ENCODE measurements at regions of chr2 and their contacts with region 1.

Region 1: GRCh38 chr2:152036611-152037469 is 62.0 kb downstream of the CACNB4 start:
- DNase-seq: peak; percentile 63 to 85 (median 72)
- H3K4me3 ChIP-seq: no peak overlapping the region
- H3K27ac ChIP-seq: no peak overlapping the region
- H3K4me1 ChIP-seq: no peaks in the 10 kb centered on the region
- H3K27me3 ChIP-seq: no peaks in the 10 kb centered on the region
- CTCF ChIP-seq: peak; percentile 68 to 86 (median 78)
- POLR2A ChIP-seq: no peak

Region 2: GRCh38 chr2:152175458-152176325 is 138.9 kb after region 1 on chr2 and contains the start of gene STAM2:
- intact Hi-C with region 1: loop called in 1 of 2 experiments (anchors 5 kb)
- DNase-seq: peak; percentile 92 to 97 (median 94)
- H3K4me3 ChIP-seq: peak within 1 kb of the TSS; percentile 29 to 99 (median 82)
- H3K27ac ChIP-seq: peak within 1 kb of the TSS; percentile 92 to 99 (median 97)
- H3K4me1 ChIP-seq: peaks cover 10 to 36% of the 10 kb centered on the region in 2 donors
- H3K27me3 ChIP-seq: no peaks in the 10 kb centered on the region
- CTCF ChIP-seq: peak; percentile 86 to 97 (median 94)
- POLR2A ChIP-seq: peak; percentile 78 to 88
- total RNA-seq, gene STAM2: 22.8 to 45.8 (median 34.0) TPM

Region 3: DNA sequence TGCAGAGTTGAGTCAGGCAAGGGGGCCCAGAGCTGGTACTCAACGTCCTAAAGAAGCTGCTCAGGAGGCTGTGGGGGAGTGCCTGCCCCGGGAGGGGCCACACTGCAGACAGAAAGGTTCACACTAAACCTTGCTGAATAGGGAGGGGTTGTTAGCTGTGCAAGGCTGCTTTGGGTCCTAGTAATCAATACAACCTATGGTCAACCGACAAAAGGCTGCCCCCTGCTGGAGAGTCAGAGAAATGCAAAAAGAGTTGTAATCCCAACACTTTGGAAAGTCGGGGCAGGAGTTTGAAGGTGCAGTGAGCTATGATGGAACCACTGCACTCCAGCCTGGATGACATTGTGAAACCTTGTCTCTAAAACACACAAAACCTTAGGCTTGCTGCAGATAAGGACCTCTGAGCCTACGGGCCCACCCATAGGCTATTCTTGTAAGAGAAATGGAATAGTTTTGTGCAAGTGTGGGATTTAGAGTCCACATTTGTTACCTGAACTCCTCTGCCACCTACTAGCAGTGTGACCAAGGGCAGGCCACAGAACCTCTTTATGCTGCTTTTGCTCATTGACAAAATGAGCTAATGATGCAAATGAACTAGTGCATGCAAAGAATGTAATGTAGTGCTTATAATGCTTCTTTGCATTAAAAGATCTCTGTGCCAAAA is 598.9 kb after region 1 on chr2:
- intact Hi-C with region 1: loop called in 1 of 2 experiments (anchors 5 kb)
- DNase-seq: peak; percentile 45 to 84 (median 69)
- H3K4me3 ChIP-seq: no peak overlapping the region
- H3K27ac ChIP-seq: no peak overlapping the region
- H3K4me1 ChIP-seq: no peaks in the 10 kb centered on the region
- H3K27me3 ChIP-seq: no peaks in the 10 kb centered on the region
- CTCF ChIP-seq: peak; percentile 71 to 85 (median 81)
- POLR2A ChIP-seq: no peak